Right ventricle myocardium inferior (tissue), 1 donor: ENCODE measurements at regions of chr5 and their contacts with region 1.

Region 1: GRCh38 chr5:171644536-171644935 is 141.1 kb upstream of the SMIM23 start:
- DNase-seq: peak; percentile 70
- ATAC-seq: no peak

Region 2: GRCh38 chr5:171701100-171701541 is 56.6 kb after region 1 on chr5:
- intact Hi-C with region 1: loop called (anchors 2 kb)
- DNase-seq: no peak
- ATAC-seq: peak; percentile 69

Region 3: DNA sequence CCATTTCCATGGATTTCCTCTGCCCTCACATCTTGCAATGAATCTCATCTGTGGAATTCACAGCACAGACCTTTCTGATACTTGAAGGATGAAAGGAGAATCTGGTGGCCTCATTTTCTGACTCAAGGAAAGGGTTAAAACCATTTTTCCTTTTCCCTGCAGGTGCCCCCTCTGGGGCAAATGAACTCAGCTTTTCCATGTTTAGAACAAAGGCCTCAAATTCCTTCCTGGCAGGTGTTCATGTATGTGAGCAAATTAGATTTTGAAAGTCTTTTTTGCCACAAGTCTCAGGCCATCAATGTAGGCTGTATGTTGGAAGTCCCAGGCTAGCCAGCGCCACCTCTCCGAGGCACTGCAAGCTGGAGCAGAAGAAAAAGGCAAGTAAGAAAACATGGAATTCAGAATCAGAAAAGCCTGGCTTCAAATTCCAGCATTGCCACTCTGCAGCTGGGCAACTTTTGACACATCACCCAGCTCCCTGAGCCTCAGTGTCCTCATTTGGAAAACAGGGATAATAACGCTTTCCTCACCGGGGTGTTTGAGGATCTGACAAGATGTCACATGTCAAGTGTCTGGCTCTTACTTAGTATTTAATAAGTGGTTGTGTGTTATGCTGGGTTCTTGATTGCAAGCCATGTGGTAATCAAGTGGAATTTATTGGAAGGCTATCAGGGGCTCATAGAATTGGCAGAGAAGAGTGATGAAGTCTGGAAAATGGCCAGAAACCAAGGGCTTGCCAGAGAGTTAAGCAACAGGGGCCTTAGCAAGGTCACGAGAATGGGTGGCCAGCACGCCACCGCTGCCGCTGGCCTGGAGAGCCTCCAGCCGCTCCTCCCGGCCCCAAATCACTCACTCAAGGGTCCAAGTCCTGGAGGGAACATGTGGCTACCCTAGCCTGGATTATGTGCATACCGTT is 92.7 kb after region 1 on chr5:
- intact Hi-C with region 1: loop called (anchors 2 kb)
- DNase-seq: no peak
- ATAC-seq: peak; percentile 88

Region 4: DNA sequence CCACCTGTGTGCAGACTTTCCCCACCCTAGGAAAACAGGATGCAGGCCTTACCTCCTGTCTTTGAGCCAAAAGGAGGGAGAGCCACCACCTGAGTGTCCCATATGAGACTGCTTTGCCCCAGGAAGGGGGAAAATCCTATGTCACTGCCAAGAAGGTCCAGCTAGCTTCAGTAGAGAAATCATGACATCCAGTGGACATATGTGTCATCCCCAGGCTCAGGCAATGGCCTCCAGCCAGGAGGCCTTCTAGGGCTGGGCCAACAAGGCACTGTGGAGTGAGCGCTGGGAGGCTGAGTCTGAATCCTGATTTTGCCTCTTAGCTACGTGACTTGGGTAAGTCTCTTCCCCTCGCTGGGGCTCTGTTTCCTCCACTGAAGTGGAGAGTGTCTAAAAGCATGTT is 201.3 kb after region 1 on chr5:
- intact Hi-C with region 1: loop called (anchors 5 kb)
- DNase-seq: no peak
- ATAC-seq: peak; percentile 49